Dorsolateral prefrontal cortex (tissue), 120 donors: ENCODE measurements at regions of chr1 and their contacts with region 1.

Region 1: DNA sequence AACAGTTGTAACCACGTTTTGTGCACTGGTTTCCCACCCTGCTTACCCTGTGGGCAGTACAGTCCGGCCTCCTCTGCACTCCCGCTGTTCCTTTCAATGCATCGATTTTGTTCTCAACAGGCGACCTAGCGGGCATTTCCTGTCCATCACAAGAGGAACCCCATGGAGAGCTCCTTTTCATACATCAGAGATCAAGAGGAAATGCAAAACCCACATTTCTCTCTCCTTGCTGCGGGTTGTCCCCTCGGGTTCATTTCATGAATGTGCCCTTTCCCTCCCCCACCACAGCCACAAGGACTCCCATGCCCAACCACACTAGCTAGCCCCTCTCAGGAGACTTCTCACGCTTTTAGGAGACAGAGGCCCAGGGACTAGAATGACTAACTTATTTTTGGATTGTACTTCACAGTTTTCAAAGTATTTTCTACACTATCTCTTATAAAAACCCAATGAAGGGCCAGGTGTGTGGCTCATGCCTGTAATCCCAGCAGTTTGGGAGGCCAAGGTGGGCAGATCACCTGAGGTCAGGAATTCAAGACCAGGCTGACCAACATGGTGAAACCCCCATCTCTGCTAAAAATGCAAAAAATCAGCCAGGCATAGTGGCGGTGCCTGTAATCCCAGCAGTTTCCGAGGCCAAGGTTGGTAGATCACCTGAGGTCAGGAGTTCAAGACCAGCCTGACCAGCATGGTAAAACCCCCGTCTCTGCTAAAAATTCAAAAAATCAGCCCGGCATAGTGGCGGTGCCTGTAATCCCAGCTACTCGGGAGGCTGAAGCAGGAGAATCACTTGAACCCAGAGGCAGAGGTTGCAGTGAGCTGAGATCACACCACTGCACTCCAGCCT is 18.4 kb downstream of the ATP1A4 start:
- DNase-seq: no peak
- H3K4me3 ChIP-seq: no peak overlapping the region
- H3K27ac ChIP-seq: peak overlapping the region in 11 of 59 donors; percentile 2 to 74 (median 14)
- H3K27me3 ChIP-seq: no peaks in the 10 kb centered on the region
- CTCF ChIP-seq: no peak

Region 2: DNA sequence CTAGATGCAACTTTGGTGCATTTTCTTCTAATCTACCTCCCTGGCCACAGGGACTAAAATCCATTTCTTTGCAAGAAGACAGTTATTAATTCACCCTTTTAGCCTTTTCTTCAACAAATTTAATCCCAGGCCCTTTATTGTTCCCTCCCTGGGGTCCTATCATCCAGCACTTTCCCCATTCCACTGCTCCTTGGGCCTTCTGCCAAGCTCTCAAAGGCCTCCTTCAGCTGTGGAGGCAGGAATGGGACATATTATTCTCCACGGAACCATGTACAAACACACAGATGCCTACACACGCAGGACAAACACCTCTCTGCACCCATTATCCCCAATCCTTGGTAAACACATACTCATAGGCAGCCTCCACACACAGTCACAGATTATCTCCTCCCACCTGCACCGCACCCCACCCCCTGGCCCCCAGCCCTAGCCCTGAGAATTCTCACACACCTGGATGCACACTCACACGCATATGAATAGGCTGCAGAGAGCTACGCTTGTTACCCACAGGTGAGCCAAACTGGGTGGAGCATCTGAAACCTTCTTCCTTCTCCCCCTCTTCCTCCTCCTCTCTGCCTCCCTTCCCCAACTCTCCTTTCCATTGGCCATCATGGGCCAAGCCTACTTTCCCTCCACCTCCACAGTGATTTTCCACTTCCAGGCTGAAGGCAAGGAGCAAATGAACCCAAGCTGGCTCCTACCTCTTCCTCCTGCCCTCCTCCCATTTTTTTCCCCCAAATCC is 256.2 kb before region 1 on chr1:
- intact Hi-C with region 1: no loop called
- DNase-seq: no peak
- H3K4me3 ChIP-seq: no peak overlapping the region
- H3K27ac ChIP-seq: no peak overlapping the region
- H3K27me3 ChIP-seq: no peaks in the 10 kb centered on the region
- CTCF ChIP-seq: no peak

Region 3: GRCh38 chr1:159960721-159961381 is 208.9 kb before region 1 on chr1:
- intact Hi-C with region 1: no loop called
- DNase-seq: no peak
- H3K4me3 ChIP-seq: no peak overlapping the region
- H3K27ac ChIP-seq: no peak overlapping the region
- H3K27me3 ChIP-seq: peaks cover 0 to 4% (median 0%) of the 10 kb centered on the region in 45 donors
- CTCF ChIP-seq: no peak

Region 4: DNA sequence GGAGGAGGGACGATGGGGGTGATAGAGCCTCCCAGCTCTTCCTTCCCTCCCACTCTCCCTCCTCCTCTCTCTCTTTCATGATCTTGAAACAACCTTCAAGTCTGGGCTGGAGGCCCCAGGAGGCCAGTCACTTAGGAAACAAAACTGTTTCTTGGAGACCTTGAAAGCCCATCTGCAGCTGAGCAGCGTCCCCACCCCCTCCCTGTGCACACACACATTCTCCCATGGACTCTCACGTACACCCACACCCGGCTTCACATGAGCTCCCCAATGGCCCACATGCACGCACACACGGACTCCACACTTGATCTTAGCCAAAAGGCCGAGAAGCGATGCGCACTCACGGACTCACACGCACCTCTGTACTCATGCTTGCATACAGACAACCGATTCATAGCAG is 57.4 kb before region 1 on chr1:
- intact Hi-C with region 1: loop called in 1 of 2 experiments (anchors 2 kb)
- DNase-seq: no peak
- H3K4me3 ChIP-seq: no peak overlapping the region
- H3K27ac ChIP-seq: peak overlapping the region in 41 of 59 donors; percentile 6 to 88 (median 67)
- H3K27me3 ChIP-seq: no peaks in the 10 kb centered on the region
- CTCF ChIP-seq: no peak

Region 5: DNA sequence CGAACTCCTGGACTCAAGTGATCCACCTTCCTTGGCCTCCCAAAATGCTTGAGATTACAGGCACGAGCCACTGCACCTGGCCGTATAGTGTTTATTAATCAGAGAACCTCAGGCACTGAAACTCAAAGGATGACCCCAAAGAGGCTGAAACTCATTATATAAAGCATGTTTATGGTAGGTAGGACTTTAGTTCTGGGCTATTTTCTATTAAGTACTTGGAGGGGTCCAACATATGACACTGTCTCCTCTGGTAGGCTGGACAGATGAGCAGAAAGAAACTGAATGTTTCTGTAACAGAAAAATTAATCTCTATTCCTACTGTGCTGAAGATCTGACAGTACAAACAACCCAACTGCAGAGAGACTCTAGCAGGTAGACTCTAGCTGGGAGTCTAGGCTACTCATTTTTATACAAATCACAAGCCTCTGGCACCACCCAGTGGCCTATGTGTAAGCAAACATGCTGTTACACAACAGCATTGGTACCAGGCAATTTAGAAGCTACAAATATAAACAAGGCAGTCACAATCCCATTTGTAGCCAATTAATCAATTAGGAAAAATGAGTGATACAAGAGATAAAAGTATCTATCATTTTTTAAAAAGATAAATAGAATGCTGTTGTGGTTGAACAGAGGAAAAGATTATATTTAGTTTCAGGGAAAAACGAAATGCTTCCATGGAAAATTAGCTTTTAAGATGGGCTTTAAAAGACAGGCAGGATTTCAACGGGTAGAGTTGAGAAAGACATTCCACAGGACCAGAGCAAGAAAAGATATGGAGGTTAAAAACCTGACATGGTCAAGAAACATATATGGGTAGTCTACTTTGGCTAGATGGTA is 82.1 kb after region 1 on chr1:
- intact Hi-C with region 1: no loop called
- DNase-seq: peak; percentile 40 to 91 (median 81)
- H3K4me3 ChIP-seq: peak overlapping the region in 7 of 59 donors; percentile 0 to 21 (median 2)
- H3K27ac ChIP-seq: peak overlapping the region; percentile 54 to 98 (median 88)
- H3K27me3 ChIP-seq: no peaks in the 10 kb centered on the region
- CTCF ChIP-seq: peak; percentile 71 to 99 (median 86)

Region 6: GRCh38 chr1:160607011-160607671 is 437.4 kb after region 1 on chr1:
- intact Hi-C with region 1: no loop called
- DNase-seq: peak in 2 of 10 donors; percentile 28 to 45
- H3K4me3 ChIP-seq: no peak overlapping the region
- H3K27ac ChIP-seq: no peak overlapping the region
- H3K27me3 ChIP-seq: peaks cover 0 to 29% (median 7%) of the 10 kb centered on the region in 45 donors
- CTCF ChIP-seq: peak in 54 of 56 donors; percentile 30 to 77 (median 57)